Dorsolateral prefrontal cortex (tissue), 120 donors: ENCODE measurements at regions of chr3 and their contacts with region 1.

Region 1: DNA sequence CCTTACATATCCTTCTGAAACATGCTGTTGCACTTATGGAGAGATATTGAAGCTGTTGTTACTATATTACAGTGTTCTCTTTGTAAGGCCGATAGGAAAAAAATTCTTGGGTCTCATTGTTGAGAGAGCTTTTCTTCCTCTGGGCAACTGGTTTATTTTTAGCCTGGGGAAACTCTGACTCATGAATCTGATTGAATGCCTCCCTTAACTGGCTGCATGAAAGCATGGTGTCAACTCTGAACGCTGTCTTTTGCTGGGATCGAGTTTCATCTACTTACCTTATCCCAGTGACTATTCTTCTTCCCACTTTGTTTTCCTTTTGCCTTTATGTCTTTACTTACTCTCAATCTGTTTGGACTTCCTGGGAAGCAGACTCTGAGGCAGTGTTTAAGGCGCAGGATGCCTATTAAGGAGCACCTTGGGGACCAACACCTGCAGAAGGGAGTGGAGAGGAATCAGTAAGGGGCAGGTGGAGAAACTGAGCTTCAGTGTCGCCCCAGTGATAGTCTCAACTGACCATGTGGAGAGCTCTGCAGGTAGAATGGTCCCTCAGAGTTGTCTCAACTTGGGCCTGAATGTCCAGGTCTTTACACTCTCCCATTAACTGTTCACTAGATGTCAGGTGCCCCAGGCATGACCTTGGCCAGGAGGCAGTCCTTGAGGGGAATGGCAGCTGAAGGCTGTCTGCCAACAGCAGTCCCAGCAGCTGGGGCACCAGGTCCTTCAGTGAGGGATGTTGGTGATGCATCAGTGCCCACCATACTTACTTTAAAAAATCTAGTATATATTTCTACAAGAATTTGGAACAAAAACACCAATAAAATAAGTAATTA is 88.9 kb upstream of the CCNL1 start:
- DNase-seq: peak in 2 of 10 donors; percentile 7 to 35
- H3K4me3 ChIP-seq: peak overlapping the region in 15 of 59 donors; percentile 2 to 27 (median 14)
- H3K27ac ChIP-seq: peak overlapping the region; percentile 44 to 98 (median 93)
- H3K27me3 ChIP-seq: no peaks in the 10 kb centered on the region
- CTCF ChIP-seq: peak in 10 of 56 donors; percentile 6 to 40 (median 22)

Region 2: DNA sequence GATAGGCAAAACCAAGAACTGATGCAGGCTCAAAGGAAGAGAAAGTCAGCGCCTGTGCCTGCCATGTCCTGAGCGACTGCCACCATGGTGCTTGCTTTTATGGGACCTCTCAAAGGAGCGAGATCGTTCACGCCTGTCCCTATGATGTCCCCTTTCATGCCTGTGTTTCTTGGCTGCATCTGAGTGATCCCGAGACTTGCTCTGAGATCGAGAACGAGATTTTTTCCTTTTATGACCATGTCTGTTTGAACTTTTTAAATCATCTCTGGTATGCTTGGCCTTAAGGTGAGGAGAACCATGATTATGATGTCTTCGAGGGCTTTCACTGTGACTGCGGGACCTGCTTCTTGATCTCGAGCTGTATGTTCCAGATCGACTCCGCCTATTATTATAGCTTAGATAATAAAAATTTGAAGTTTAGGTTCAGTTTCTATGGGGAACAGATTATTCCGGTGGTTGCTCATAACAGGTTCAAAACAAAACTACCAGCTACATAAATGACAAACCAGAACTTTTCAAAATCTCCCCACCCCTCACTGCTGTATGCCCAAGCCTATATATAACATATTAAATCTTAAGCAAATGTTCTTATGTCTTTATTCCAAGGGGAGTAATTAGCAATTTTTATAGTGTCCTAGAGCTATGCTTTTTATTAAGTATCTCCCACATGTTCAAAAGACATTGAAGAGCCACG is 100.5 kb before region 1 on chr3:
- intact Hi-C with region 1: no loop called
- DNase-seq: no peak
- H3K4me3 ChIP-seq: no peak overlapping the region
- H3K27ac ChIP-seq: no peak overlapping the region
- H3K27me3 ChIP-seq: no peaks in the 10 kb centered on the region
- CTCF ChIP-seq: no peak

Region 3: DNA sequence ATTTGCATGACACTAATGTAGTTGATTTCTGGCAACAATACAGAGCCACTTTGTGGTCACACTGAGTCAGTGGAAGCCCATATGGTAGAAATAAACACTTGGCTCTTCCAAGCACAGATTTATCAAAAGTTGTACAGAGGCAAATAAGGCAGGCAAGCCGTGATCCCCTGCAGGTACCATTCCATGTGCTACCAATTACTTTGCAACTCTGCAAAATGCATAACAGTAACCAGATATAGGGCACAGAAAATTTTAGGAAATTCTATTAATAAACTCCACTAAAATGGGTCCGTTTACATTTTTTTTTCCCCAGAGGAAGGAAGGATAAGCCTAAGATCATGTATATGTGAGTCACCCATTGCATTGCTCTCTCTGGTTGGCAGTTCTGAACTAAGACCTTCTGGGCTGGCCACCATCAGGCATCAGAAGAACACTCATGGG is 84.8 kb after region 1 on chr3:
- intact Hi-C with region 1: loop called in 1 of 2 experiments (anchors 5 kb)
- DNase-seq: no peak
- H3K4me3 ChIP-seq: no peak overlapping the region
- H3K27ac ChIP-seq: no peak overlapping the region
- H3K27me3 ChIP-seq: no peaks in the 10 kb centered on the region
- CTCF ChIP-seq: no peak